Heart right ventricle (tissue), 16 donors: ENCODE measurements at regions of chr17 and their contacts with region 1.

Region 1: GRCh38 chr17:41167561-41167960 is 460 bp downstream of the KRTAP4-3 start:
- DNase-seq: no peak
- ATAC-seq: no peak
- H3K4me3 ChIP-seq: no peak overlapping the region
- H3K27ac ChIP-seq: no peak overlapping the region
- H3K4me1 ChIP-seq: no peaks in the 10 kb centered on the region
- H3K27me3 ChIP-seq: peaks cover 0 to 24% (median 4%) of the 10 kb centered on the region in 7 donors
- CTCF ChIP-seq: no peak

Region 2: GRCh38 chr17:41082626-41083025 is 84.9 kb before region 1 on chr17:
- intact Hi-C with region 1: loop called in 1 of 10 experiments (anchors 5 kb)
- DNase-seq: no peak
- ATAC-seq: no peak
- H3K4me3 ChIP-seq: no peak overlapping the region
- H3K27ac ChIP-seq: no peak overlapping the region
- H3K4me1 ChIP-seq: no peaks in the 10 kb centered on the region
- H3K27me3 ChIP-seq: peaks cover 0 to 22% (median 5%) of the 10 kb centered on the region in 7 donors
- CTCF ChIP-seq: no peak

Region 3: DNA sequence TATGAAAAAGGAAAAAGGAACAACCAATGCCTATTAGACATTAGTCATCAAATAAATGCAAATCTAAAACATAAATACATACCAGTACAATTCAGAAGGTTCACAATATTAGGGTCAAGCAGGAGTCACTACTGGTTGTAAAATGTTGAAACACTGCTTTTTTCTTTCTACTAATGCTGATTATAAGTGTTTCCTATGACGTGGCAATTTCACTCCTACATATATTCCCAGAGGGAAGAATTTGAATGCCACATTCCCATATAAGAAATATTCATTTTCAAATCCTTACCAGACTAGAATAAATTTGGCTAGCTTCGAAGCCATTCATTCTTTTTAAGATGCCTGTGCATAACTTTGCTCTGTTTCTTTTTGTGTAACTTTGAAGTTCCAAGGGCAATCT is 56.3 kb after region 1 on chr17:
- intact Hi-C with region 1: loop called in 1 of 10 experiments (anchors 10 kb)
- DNase-seq: no peak
- ATAC-seq: no peak
- H3K4me3 ChIP-seq: no peak overlapping the region
- H3K27ac ChIP-seq: no peak overlapping the region
- H3K4me1 ChIP-seq: no peaks in the 10 kb centered on the region
- H3K27me3 ChIP-seq: peaks cover 0 to 20% (median 0%) of the 10 kb centered on the region in 7 donors
- CTCF ChIP-seq: no peak